Mammary epithelial cell (primary cell): ENCODE measurements at regions of chr10 and their contacts with region 1.

Region 1: GRCh38 chr10:97037365-97038361 is 148.1 kb downstream of the SLIT1 start:
- DNase-seq: peak; percentile 65
- H3K4me3 ChIP-seq: peak overlapping the region in 1 of 3 experiments; percentile 38
- H3K27ac ChIP-seq: no peak overlapping the region
- H3K4me1 ChIP-seq: peaks cover 3% of the 10 kb centered on the region
- H3K27me3 ChIP-seq: no peaks in the 10 kb centered on the region
- CTCF ChIP-seq: peak; percentile 87 to 90

Region 2: DNA sequence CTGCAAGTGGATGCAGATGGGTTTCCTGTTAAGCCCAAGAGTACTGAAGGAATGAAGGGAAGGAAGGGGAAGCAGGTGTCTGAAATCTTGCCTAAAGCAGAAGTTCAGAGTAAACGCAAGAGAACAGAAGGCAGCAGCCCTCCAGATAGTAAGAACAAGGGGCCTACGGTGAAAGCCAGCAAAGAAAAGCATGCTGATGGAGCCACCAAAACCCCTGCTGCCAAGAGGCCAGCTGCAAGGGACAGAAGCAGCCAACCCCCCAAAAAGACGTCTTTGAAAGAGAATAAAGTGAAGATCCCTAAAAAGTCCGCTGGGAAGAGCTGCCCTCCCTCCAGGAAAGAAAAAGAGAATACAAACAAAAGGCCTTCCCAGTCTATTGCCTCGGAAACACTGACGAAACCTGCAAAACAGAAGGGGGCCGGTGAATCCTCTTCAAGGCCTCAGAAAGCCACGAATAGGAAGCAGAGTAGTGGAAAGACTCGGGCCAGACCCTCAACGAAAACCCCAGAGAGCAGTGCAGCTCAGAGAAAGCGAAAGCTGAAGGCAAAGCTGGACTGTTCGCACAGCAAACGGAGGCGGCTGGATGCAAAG is 53.0 kb before region 1 on chr10:
- CTCF ChIA-PET with region 1: no interaction called
- dilution Hi-C with region 1: loop called (anchors 5 kb)
- in situ Hi-C with region 1: no loop called
- intact Hi-C with region 1: no loop called
- DNase-seq: no peak
- H3K4me3 ChIP-seq: no peak overlapping the region
- H3K27ac ChIP-seq: no peak overlapping the region
- H3K4me1 ChIP-seq: peaks cover 3% of the 10 kb centered on the region
- H3K27me3 ChIP-seq: no peaks in the 10 kb centered on the region
- CTCF ChIP-seq: no peak

Region 3: GRCh38 chr10:97072851-97073665 is 35.4 kb after region 1 on chr10:
- CTCF ChIA-PET with region 1: no interaction called
- dilution Hi-C with region 1: no loop called
- in situ Hi-C with region 1: no loop called
- intact Hi-C with region 1: loop called (anchors 1 kb)
- DNase-seq: peak; percentile 58
- H3K4me3 ChIP-seq: no peak overlapping the region
- H3K27ac ChIP-seq: no peak overlapping the region
- H3K4me1 ChIP-seq: no peaks in the 10 kb centered on the region
- H3K27me3 ChIP-seq: no peaks in the 10 kb centered on the region
- CTCF ChIP-seq: peak; percentile 91 to 93

Region 4: DNA sequence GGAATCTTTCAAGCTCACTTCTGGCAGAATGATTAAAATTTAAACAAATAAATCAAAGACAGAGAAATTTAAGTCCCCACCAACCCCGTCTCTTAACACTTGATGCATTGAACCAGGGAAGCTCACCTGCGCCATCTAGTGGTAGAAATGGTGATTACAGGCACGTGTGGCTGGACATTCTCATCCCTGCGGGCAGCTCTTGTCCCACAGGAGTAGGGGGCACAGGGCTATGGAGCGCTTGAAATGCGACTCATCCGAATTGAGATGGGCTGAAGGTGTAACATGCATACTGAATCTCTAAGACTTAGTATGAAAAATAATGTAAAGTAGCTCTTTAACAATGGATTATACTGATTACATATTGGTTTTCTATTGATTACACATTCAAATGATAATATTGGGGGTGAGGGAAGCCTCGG is 172.9 kb after region 1 on chr10:
- CTCF ChIA-PET with region 1: no interaction called
- dilution Hi-C with region 1: no loop called
- in situ Hi-C with region 1: no loop called
- intact Hi-C with region 1: loop called (anchors 1 kb)
- DNase-seq: peak; percentile 40
- H3K4me3 ChIP-seq: no peak overlapping the region
- H3K27ac ChIP-seq: no peak overlapping the region
- H3K4me1 ChIP-seq: no peaks in the 10 kb centered on the region
- H3K27me3 ChIP-seq: no peaks in the 10 kb centered on the region
- CTCF ChIP-seq: peak; percentile 94 to 97

Region 5: DNA sequence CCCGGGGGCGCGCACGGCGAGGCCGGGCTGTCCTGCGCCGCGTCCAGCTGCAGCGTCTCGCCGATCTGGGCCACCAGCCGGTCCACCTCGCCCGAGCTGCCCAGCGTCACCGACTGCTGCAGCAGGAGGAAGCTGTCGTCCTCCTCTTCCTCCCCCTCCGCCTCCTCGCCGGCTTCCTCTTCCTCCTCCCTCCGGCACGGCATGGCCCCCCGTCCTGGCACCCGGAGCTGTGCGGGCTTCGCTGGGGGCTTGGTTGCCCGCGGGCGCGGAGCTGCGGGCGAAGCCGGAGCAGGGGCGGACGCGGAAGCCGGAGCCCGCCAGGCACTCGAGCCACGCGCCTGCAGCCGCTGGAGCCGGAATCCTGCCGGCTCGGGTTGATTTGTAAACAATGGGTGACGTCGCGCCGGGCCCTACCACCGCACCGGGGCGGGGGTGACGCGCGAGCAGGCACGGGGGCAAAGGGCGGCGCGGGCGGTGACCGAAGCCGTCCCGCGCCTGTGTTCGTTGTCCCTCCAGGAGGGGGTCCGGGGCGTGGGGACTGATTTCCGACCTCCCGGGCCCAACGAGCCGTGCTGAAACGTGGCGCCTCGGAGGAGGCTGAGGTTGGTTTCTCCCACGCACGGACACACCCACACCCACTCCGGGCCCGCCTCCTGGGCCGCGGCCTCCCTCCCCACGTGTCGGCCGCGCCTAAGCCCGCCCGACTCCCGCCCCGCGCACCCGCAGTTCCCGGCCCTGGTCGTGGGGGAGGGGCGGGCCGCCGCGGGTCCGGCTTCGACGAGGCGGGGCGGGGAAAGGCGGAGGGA is 296.9 kb after region 1 on chr10 and contains the start of gene FRAT2:
- CTCF ChIA-PET with region 1: no interaction called
- dilution Hi-C with region 1: no loop called
- in situ Hi-C with region 1: no loop called
- intact Hi-C with region 1: loop called (anchors 5 kb)
- DNase-seq: peak; percentile 86
- H3K4me3 ChIP-seq: peak within 1 kb of the TSS; percentile 66 to 82 (median 78)
- H3K27ac ChIP-seq: peak within 1 kb of the TSS; percentile 94
- H3K4me1 ChIP-seq: peaks cover 20% of the 10 kb centered on the region
- H3K27me3 ChIP-seq: no peaks in the 10 kb centered on the region
- CTCF ChIP-seq: no peak
- total RNA-seq, gene FRAT2: 5.0 to 5.3 TPM